Mammary epithelial cell (primary cell): ENCODE measurements at regions of chr6 and their contacts with region 1.

Region 1: GRCh38 chr6:137323860-137324259 is 104.7 kb upstream of the IFNGR1 start:
- DNase-seq: no peak
- H3K4me3 ChIP-seq: no peak overlapping the region
- H3K27ac ChIP-seq: no peak overlapping the region
- H3K4me1 ChIP-seq: no peaks in the 10 kb centered on the region
- H3K27me3 ChIP-seq: no peaks in the 10 kb centered on the region
- CTCF ChIP-seq: no peak

Region 2: GRCh38 chr6:137283940-137284810 is 39.7 kb before region 1 on chr6:
- CTCF ChIA-PET with region 1: no interaction called
- dilution Hi-C with region 1: loop called (anchors 5 kb)
- in situ Hi-C with region 1: no loop called
- intact Hi-C with region 1: no loop called
- DNase-seq: peak; percentile 32
- H3K4me3 ChIP-seq: no peak overlapping the region
- H3K27ac ChIP-seq: no peak overlapping the region
- H3K4me1 ChIP-seq: no peaks in the 10 kb centered on the region
- H3K27me3 ChIP-seq: no peaks in the 10 kb centered on the region
- CTCF ChIP-seq: no peak

Region 3: GRCh38 chr6:137370871-137371633 is 47.2 kb after region 1 on chr6:
- CTCF ChIA-PET with region 1: no interaction called
- dilution Hi-C with region 1: loop called (anchors 10 kb)
- in situ Hi-C with region 1: no loop called
- intact Hi-C with region 1: no loop called
- DNase-seq: no peak
- H3K4me3 ChIP-seq: no peak overlapping the region
- H3K27ac ChIP-seq: no peak overlapping the region
- H3K4me1 ChIP-seq: no peaks in the 10 kb centered on the region
- H3K27me3 ChIP-seq: peaks cover 4% of the 10 kb centered on the region
- CTCF ChIP-seq: peak; percentile 9 to 10

Region 4: GRCh38 chr6:137471497-137471896 is 147.6 kb after region 1 on chr6:
- CTCF ChIA-PET with region 1: no interaction called
- dilution Hi-C with region 1: no loop called
- in situ Hi-C with region 1: no loop called
- intact Hi-C with region 1: no loop called
- DNase-seq: no peak
- H3K4me3 ChIP-seq: no peak overlapping the region
- H3K27ac ChIP-seq: no peak overlapping the region
- H3K4me1 ChIP-seq: no peaks in the 10 kb centered on the region
- H3K27me3 ChIP-seq: peaks cover 2% of the 10 kb centered on the region
- CTCF ChIP-seq: no peak